Activated CD8-positive, alpha-beta T cell treated with anti-CD3 and anti-CD28 coated beads, Interleukin-2, amount 10 ng/mL, durations not matched to agents 7 days and 5 days (primary cell): ENCODE measurements at regions of chr10 and their contacts with region 1.

Region 1: GRCh38 chr10:97278491-97278989 is 13.9 kb downstream of the ARHGAP19 start:
- DNase-seq: no peak
- ATAC-seq: peak; percentile 76
- H3K4me3 Mint-ChIP-seq: no peak overlapping the region
- H3K27ac Mint-ChIP-seq: no peak overlapping the region
- H3K4me1 Mint-ChIP-seq: peaks cover 10% of the 10 kb centered on the region
- H3K27me3 Mint-ChIP-seq: no peaks in the 10 kb centered on the region

Region 2: GRCh38 chr10:97261183-97261582 is 17.4 kb before region 1 on chr10:
- CTCF ChIA-PET with region 1: interaction called, 20 read pairs
- POLR2A ChIA-PET with region 1: no interaction called
- DNase-seq: no peak
- ATAC-seq: no peak
- H3K4me3 Mint-ChIP-seq: no peak overlapping the region
- H3K27ac Mint-ChIP-seq: no peak overlapping the region
- H3K4me1 Mint-ChIP-seq: peaks cover 1% of the 10 kb centered on the region
- H3K27me3 Mint-ChIP-seq: no peaks in the 10 kb centered on the region

Region 3: GRCh38 chr10:97334370-97335175 is 56.0 kb after region 1 on chr10 and contains the start of gene FRAT2:
- CTCF ChIA-PET with region 1: interaction called, 18 read pairs
- POLR2A ChIA-PET with region 1: interaction called, 6 read pairs
- DNase-seq: peak; percentile 89
- ATAC-seq: peak; percentile 89
- H3K4me3 Mint-ChIP-seq: peak within 1 kb of the TSS; percentile 75
- H3K27ac Mint-ChIP-seq: peak within 1 kb of the TSS; percentile 93
- H3K4me1 Mint-ChIP-seq: peaks cover 32% of the 10 kb centered on the region
- H3K27me3 Mint-ChIP-seq: peaks cover 28% of the 10 kb centered on the region
- total RNA-seq, gene FRAT2: 10.0 to 10.4 TPM

Region 4: DNA sequence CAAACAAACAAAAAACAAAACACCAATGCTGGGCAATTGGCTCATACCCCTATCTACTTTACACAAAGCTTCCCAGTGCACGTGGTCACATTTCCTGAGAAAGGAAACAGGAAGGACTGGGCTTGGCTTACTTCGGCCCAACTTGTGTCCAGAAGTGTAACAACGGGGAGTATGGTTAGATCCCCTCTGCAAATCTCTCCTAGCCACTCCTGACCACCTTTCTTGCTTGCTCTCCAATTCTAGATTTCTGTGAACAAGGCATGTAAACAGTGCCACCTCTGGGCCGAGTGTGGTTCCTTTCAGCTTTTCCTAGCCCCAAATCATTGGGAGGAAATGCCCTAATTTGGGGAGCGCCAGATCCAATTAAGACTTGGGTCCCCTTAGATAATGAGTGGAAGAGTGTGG is 77.0 kb after region 1 on chr10:
- CTCF ChIA-PET with region 1: interaction called, 22 read pairs
- POLR2A ChIA-PET with region 1: no interaction called
- DNase-seq: no peak
- ATAC-seq: no peak
- H3K4me3 Mint-ChIP-seq: no peak overlapping the region
- H3K27ac Mint-ChIP-seq: no peak overlapping the region
- H3K4me1 Mint-ChIP-seq: peaks cover 16% of the 10 kb centered on the region
- H3K27me3 Mint-ChIP-seq: no peaks in the 10 kb centered on the region

Region 5: DNA sequence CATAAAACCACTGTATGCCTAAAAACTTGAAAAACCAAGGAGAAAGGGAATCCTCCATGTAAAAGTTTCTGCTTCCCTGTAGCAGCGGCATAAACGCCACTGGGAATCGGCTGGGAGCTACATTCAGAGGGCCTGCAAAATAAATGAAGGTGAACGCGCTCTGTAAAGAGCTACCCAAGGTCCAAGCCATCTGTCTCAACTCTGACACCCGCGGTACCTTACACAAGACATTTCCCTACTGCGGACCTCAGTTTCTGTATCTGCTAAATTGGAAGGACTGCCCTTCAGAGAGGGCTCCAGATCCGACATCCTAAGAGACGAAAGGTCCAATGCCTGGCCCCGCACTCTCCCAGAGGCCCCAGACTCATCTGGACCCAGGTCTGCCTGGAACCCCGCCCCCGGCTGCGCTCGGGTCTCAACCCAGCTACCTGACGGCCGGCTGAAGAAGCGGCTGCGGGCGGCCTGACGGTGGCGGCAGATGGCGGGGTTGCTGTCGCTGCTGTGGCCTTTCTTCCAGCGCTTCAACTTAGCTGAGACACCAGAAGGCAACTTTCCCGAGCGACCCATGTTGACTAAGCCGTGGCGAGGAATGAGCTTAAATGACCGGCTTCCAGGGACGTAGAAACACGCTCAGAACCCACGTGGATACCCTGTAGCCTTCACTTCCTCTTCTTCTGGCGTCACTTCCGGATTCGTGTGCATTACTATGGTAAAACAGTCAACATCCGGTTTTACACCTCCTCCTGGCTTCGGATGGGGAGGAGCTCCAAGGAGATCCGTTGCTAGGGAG is 122.3 kb after region 1 on chr10 and contains the start of gene RRP12:
- CTCF ChIA-PET with region 1: interaction called, 12 read pairs
- POLR2A ChIA-PET with region 1: interaction called, 3 read pairs
- DNase-seq: peak; percentile 95
- ATAC-seq: peak; percentile 87
- H3K4me3 Mint-ChIP-seq: peak within 1 kb of the TSS; percentile 95
- H3K27ac Mint-ChIP-seq: peak within 1 kb of the TSS; percentile 96
- H3K4me1 Mint-ChIP-seq: peaks cover 19% of the 10 kb centered on the region
- H3K27me3 Mint-ChIP-seq: no peaks in the 10 kb centered on the region
- total RNA-seq, gene RRP12: 30.9 to 35.6 TPM